IMR-90 (cell line): ENCODE measurements at regions of chr17 and their contacts with region 1.

Region 1: DNA sequence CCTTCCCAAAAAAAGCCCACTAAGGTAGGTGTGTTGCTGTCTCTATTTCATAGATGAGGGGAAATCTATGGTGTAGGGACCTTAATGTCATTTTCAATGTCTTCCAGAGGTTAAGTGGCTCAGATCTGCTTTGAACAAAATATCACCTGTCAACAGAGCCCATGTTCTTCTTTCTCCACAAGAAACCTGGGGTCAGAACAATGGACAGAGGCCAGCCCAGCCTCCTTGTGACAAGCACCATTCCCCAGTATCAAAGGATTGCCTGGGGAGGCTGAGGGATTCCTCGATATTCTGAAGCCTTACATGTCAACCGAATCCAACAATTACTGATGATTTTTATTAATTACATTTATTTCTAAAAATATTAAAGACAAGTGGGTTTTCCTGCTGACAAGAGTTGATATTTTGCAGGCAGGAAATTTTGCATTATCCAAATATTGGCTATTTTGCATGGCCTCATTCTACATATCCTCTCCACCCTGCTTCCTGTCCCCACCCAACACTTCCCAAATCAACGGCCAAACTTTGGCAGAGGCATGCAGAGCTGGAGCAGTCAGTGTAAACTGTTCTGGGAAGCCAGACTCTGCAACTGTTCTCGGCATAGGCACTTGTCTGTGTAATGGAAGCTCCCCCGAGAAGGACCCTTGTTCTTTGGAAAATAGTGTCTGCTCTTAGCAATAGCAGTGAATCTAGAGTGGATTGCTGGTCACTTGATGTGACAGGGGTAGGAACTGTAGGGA is 281.5 kb downstream of the HS3ST3A1 start:
- DNase-seq: no peak
- ATAC-seq: no peak
- H3K4me3 ChIP-seq: no peak overlapping the region
- H3K27ac ChIP-seq: no peak overlapping the region
- H3K4me1 ChIP-seq: no peaks in the 10 kb centered on the region
- H3K27me3 ChIP-seq: no peaks in the 10 kb centered on the region
- CTCF ChIP-seq: no peak
- POLR2A ChIP-seq: no peak
- RAD21 ChIP-seq: no peak

Region 2: GRCh38 chr17:13187656-13188055 is 132.6 kb before region 1 on chr17:
- CTCF ChIA-PET with region 1: no interaction called
- POLR2A ChIA-PET with region 1: interaction called, 16 read pairs
- dilution Hi-C with region 1: no loop called
- in situ Hi-C with region 1: no loop called
- intact Hi-C with region 1: no loop called
- DNase-seq: no peak
- ATAC-seq: no peak
- H3K4me3 ChIP-seq: no peak overlapping the region
- H3K27ac ChIP-seq: no peak overlapping the region
- H3K4me1 ChIP-seq: no peaks in the 10 kb centered on the region
- H3K27me3 ChIP-seq: no peaks in the 10 kb centered on the region
- CTCF ChIP-seq: no peak
- POLR2A ChIP-seq: no peak
- RAD21 ChIP-seq: no peak

Region 3: DNA sequence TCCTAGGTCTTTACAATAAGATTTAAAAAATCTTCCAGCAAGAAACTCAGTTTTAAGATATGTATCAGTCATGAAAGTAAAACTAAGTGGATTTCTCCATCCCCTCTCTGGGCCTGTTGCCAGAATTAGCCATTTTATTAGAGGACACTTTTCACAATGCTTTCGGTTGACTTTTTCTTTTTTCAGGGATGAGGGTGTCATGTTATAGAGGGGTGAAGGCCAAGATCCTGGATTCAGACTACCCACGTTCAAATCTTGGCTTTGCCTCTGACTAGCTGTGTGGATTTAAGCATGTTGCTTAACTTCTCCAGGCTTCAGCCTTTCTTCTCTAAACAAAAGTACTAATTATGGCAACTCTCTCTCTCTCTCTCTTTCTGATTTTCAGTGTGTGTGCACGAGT is 637.4 kb after region 1 on chr17:
- CTCF ChIA-PET with region 1: no interaction called
- POLR2A ChIA-PET with region 1: no interaction called
- dilution Hi-C with region 1: no loop called
- in situ Hi-C with region 1: no loop called
- intact Hi-C with region 1: no loop called
- DNase-seq: peak; percentile 49
- ATAC-seq: peak; percentile 24; the same call in 1 of the 2 replicates
- H3K4me3 ChIP-seq: no peak overlapping the region
- H3K27ac ChIP-seq: no peak overlapping the region
- H3K4me1 ChIP-seq: no peaks in the 10 kb centered on the region
- H3K27me3 ChIP-seq: no peaks in the 10 kb centered on the region
- CTCF ChIP-seq: no peak
- POLR2A ChIP-seq: no peak
- RAD21 ChIP-seq: no peak